ENCODE measurements at regions of chr4 and their contacts with region 1.

Region 1: GRCh38 chr4:80173401-80173800 is 23.9 kb upstream of the PRDM8 start:
- DNase-seq: peak; percentile 67
- H3K4me3 Mint-ChIP-seq: peak overlapping the region; percentile 57
- H3K27ac Mint-ChIP-seq: peak overlapping the region; percentile 96
- H3K4me1 Mint-ChIP-seq: peaks cover 55% of the 10 kb centered on the region
- H3K27me3 Mint-ChIP-seq: no peaks in the 10 kb centered on the region

Region 2: DNA sequence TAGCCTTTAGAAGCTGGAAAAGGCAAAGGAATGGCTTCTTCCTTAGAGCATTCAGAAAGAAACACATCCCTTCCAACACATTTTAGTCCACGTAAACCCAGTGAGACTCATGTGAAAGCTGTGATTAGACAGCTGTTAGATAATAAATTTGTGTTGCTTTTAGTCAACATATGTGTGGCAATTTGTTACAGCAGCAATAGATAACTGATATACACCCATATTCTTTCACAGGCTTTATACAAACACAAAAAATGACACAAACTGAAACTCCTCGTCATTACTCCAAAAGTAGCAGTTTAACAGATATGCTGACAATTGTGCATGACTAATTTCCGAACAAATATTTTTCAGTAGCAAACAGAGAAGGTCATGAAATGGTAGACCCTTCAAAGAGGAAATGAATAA is 165.7 kb before region 1 on chr4:
- CTCF ChIA-PET with region 1: no interaction called
- DNase-seq: no peak
- H3K4me3 Mint-ChIP-seq: no peak overlapping the region
- H3K27ac Mint-ChIP-seq: peak overlapping the region; percentile 83
- H3K4me1 Mint-ChIP-seq: peaks cover 71% of the 10 kb centered on the region
- H3K27me3 Mint-ChIP-seq: no peaks in the 10 kb centered on the region

Region 3: DNA sequence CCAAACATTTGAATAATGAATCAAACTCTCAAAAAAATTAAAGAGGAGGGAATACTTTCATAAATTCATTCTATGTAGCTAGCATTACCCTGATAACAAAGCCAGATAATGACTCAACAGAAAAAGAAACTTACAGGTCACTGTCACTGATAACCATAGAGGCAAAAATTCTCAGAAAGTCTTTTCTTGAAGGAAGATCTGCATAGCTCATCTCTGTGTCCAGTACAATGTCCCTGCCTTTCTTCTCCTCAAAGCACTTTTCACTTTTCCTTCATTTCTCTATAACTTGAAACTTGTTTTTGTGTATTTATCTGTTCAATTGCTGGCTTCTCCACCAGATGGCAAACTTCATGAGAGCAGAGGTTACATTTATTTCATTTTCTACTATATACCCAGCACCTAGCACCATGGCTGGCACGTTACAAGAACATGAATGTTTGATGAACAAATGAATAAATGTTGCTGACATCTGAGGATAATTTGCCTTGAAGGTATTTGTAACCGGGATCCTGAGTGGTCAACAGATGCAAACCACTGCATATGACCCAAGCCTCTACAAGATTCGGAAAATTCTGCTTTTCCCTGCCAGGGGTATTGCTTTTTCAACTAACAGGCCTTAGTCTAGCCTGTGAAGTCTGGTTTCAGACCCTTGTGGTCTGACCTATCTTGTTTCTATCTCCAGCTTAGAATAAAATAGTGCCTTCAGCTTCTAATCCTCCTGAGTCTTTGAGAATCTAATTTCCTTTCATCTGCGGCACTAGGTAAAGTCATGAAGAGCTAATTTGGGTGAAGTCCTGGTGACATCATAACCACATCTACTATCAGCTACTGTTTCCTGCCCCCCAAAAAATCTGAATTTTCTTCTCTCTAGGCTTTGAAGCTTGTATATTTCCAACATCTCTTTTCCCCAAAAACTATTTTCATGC is 47.9 kb before region 1 on chr4:
- CTCF ChIA-PET with region 1: interaction called, 38 read pairs
- DNase-seq: peak; percentile 54
- H3K4me3 Mint-ChIP-seq: peak overlapping the region; percentile 6
- H3K27ac Mint-ChIP-seq: peak overlapping the region; percentile 89
- H3K4me1 Mint-ChIP-seq: peaks cover 58% of the 10 kb centered on the region
- H3K27me3 Mint-ChIP-seq: no peaks in the 10 kb centered on the region

Region 4: GRCh38 chr4:80138551-80139538 is 34.6 kb before region 1 on chr4:
- CTCF ChIA-PET with region 1: interaction called, 27 read pairs
- DNase-seq: peak; percentile 73
- H3K4me3 Mint-ChIP-seq: no peak overlapping the region
- H3K27ac Mint-ChIP-seq: peak overlapping the region; percentile 88
- H3K4me1 Mint-ChIP-seq: peaks cover 54% of the 10 kb centered on the region
- H3K27me3 Mint-ChIP-seq: no peaks in the 10 kb centered on the region

Region 5: GRCh38 chr4:80471756-80472155 is 298.4 kb after region 1 on chr4:
- CTCF ChIA-PET with region 1: no interaction called
- DNase-seq: no peak
- H3K4me3 Mint-ChIP-seq: no peak overlapping the region
- H3K27ac Mint-ChIP-seq: no peak overlapping the region
- H3K4me1 Mint-ChIP-seq: peaks cover 2% of the 10 kb centered on the region
- H3K27me3 Mint-ChIP-seq: no peaks in the 10 kb centered on the region

Measured in activated naive CD4-positive, alpha-beta T cell treated with anti-CD3 and anti-CD28 coated beads, Interleukin-2, amount 10 ng/mL, durations not matched to agents 7 days and 5 days (primary cell).